ENCODE measurements at regions of chr5 and their contacts with region 1.

Region 1: GRCh38 chr5:141960449-141961202 is 2.6 kb upstream of the PCDH12 start:
- DNase-seq: peak; percentile 95
- H3K4me3 Mint-ChIP-seq: no peak overlapping the region
- H3K27ac Mint-ChIP-seq: peak overlapping the region; percentile 71
- H3K4me1 Mint-ChIP-seq: peaks cover 39% of the 10 kb centered on the region
- H3K27me3 Mint-ChIP-seq: no peaks in the 10 kb centered on the region

Region 2: GRCh38 chr5:141573489-141574121 is 387.0 kb before region 1 on chr5:
- CTCF ChIA-PET with region 1: no interaction called
- POLR2A ChIA-PET with region 1: no interaction called
- intact Hi-C with region 1: no loop called
- DNase-seq: no peak
- H3K4me3 Mint-ChIP-seq: no peak overlapping the region
- H3K27ac Mint-ChIP-seq: no peak overlapping the region
- H3K4me1 Mint-ChIP-seq: no peaks in the 10 kb centered on the region
- H3K27me3 Mint-ChIP-seq: no peaks in the 10 kb centered on the region

Region 3: GRCh38 chr5:141664732-141665461 is 295.7 kb before region 1 on chr5:
- CTCF ChIA-PET with region 1: interaction called, 59 read pairs
- POLR2A ChIA-PET with region 1: no interaction called
- intact Hi-C with region 1: no loop called
- DNase-seq: peak; percentile 85
- H3K4me3 Mint-ChIP-seq: no peak overlapping the region
- H3K27ac Mint-ChIP-seq: no peak overlapping the region
- H3K4me1 Mint-ChIP-seq: peaks cover 4% of the 10 kb centered on the region
- H3K27me3 Mint-ChIP-seq: no peaks in the 10 kb centered on the region

Region 4: GRCh38 chr5:141701360-141702119 is 259.1 kb before region 1 on chr5:
- CTCF ChIA-PET with region 1: interaction called, 277 read pairs
- POLR2A ChIA-PET with region 1: no interaction called
- intact Hi-C with region 1: no loop called
- DNase-seq: peak; percentile 49
- H3K4me3 Mint-ChIP-seq: peak overlapping the region; percentile 69
- H3K27ac Mint-ChIP-seq: no peak overlapping the region
- H3K4me1 Mint-ChIP-seq: peaks cover 17% of the 10 kb centered on the region
- H3K27me3 Mint-ChIP-seq: peaks cover 9% of the 10 kb centered on the region

Region 5: GRCh38 chr5:141889282-141889871 is 71.2 kb before region 1 on chr5:
- CTCF ChIA-PET with region 1: interaction called, 32 read pairs
- POLR2A ChIA-PET with region 1: interaction called, 3 read pairs
- intact Hi-C with region 1: loop called (anchors 2 kb)
- DNase-seq: no peak
- H3K4me3 Mint-ChIP-seq: no peak overlapping the region
- H3K27ac Mint-ChIP-seq: no peak overlapping the region
- H3K4me1 Mint-ChIP-seq: no peaks in the 10 kb centered on the region
- H3K27me3 Mint-ChIP-seq: peaks cover 25% of the 10 kb centered on the region

Region 6: DNA sequence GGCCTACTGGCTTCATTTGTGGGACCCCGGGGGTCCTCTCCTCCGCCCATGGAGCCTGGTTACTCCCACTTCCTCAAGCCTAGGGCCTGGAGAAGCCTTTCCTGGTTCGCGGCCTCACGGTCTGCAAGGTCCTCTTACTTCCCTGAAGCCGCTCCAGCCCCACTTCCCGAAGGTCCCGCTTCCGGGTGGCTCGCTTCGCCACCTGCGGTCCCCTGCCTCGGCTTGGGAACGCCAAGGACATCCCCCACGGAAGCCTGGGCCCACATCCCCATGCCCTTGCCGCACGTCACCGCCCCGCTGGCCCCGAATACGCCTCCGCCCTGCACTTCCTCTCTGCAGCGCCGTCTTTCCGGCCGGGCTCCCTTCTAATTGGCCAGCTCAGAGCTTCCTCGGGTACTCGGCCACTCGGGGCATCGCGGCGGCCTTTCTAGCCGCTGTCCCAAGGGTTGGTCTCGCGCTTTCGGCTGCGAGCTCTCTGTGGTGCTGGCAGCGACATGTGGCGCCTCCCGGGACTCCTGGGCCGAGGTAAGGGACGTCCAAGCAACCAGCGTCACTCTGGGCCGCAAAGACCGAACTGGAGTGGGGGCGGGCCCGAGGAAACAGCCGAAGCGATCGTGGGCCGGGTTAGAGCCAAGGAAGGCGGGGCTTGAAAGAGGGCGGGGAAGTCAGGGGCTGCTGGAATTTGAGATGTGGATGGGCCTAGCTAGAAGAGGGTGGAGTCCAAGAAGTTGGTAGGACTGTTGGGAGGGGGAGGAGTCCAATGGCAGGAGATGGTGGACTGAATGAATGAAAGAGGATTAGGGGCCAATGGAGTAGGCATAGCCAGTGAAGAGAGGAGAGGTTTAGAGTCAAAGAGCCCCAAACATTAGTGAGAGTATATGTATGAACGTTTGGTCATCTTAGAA is 36.9 kb before region 1 on chr5 and contains the start of gene DELE1:
- CTCF ChIA-PET with region 1: interaction called, 32 read pairs
- POLR2A ChIA-PET with region 1: interaction called, 10 read pairs
- intact Hi-C with region 1: loop called (anchors 1 kb)
- DNase-seq: peak; percentile 96
- H3K4me3 Mint-ChIP-seq: peak within 1 kb of the TSS; percentile 80
- H3K27ac Mint-ChIP-seq: peak within 1 kb of the TSS; percentile 96
- H3K4me1 Mint-ChIP-seq: peaks cover 18% of the 10 kb centered on the region
- H3K27me3 Mint-ChIP-seq: no peaks in the 10 kb centered on the region
- total RNA-seq, gene DELE1: 49.3 to 51.5 TPM

Region 7: DNA sequence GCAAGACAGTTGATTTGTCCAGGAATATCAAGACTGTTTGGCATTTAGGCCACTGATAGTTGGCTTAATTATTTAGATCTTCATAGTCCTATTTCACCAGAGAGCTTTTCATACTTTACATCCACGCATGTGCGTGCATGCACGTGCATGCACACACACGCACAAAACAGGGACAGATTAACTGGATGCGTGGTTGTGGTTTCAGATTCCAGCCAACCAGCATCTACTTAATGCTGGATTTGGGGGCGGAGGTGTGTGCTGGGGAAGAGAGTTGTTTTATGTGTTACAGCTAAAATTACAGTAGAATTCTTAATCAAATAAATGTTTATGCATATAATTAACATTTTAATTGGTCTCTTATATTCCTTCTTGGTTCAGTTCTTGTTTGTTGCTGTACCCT is 15.6 kb after region 1 on chr5:
- CTCF ChIA-PET with region 1: interaction called, 113 read pairs
- POLR2A ChIA-PET with region 1: no interaction called
- intact Hi-C with region 1: no loop called
- DNase-seq: no peak
- H3K4me3 Mint-ChIP-seq: no peak overlapping the region
- H3K27ac Mint-ChIP-seq: no peak overlapping the region
- H3K4me1 Mint-ChIP-seq: peaks cover 22% of the 10 kb centered on the region
- H3K27me3 Mint-ChIP-seq: no peaks in the 10 kb centered on the region